ENCODE measurements at regions of chr12 and their contacts with region 1.

Region 1: DNA sequence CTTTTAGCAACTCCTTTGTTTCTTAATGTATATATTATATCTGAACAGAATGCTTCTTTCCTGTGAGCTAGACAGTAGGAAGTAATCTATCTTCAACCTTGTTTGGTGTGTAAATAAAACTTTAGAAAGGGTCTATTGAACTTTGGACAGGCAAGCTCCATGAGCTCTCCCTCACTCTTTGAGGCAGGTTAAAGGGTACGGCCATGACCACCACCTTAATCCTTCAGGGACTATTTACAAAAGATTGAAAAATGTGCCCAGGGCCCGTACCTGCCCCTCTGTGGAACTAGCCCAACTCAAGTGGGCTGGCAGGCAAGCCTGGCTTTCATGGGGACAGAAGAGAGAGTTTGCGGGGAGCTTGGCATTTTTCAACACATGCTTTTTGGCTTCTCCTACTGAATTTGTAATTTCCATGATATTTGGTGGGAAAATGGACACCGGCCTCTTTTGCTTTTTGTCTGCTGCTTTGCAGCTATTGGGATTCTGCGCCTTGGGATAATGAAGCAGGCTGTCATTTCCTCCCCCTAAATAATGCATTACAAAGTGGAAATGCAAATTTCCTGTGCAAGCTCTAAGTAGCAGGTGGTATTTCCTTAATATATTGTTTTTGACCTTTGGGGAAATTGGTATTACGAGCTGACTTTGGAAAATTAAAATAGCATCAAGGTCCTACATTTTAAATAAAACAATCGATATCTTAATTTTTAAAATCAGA is 106.0 kb downstream of the HMGA2 start:
- DNase-seq: no peak
- H3K4me3 ChIP-seq: no peak overlapping the region
- H3K27ac ChIP-seq: no peak overlapping the region
- H3K4me1 ChIP-seq: peaks cover 7 to 19% (median 16%) of the 10 kb centered on the region in 4 experiments
- H3K27me3 ChIP-seq: no peaks in the 10 kb centered on the region
- CTCF ChIP-seq: no peak
- EP300 ChIP-seq: no peak
- POLR2A ChIP-seq: no peak
- RAD21 ChIP-seq: no peak

Region 2: GRCh38 chr12:65941388-65941787 is 11.1 kb after region 1 on chr12:
- CTCF ChIA-PET with region 1: interaction called, 16 read pairs
- POLR2A ChIA-PET with region 1: interaction called, 3 read pairs
- DNase-seq: no peak
- H3K4me3 ChIP-seq: no peak overlapping the region
- H3K27ac ChIP-seq: no peak overlapping the region
- H3K4me1 ChIP-seq: peaks cover 0 to 1% (median 0%) of the 10 kb centered on the region in 4 experiments; a peak in 1 of 7 replicates
- H3K27me3 ChIP-seq: no peaks in the 10 kb centered on the region
- CTCF ChIP-seq: no peak
- EP300 ChIP-seq: no peak
- POLR2A ChIP-seq: no peak
- RAD21 ChIP-seq: no peak

Region 3: GRCh38 chr12:65962921-65963861 is 32.9 kb after region 1 on chr12:
- CTCF ChIA-PET with region 1: interaction called, 10 read pairs
- POLR2A ChIA-PET with region 1: no interaction called
- DNase-seq: peak in 1 of 2 experiments; percentile 77
- H3K4me3 ChIP-seq: no peak overlapping the region
- H3K27ac ChIP-seq: no peak overlapping the region
- H3K4me1 ChIP-seq: no peaks in the 10 kb centered on the region; a peak in 1 of 7 replicates
- H3K27me3 ChIP-seq: no peaks in the 10 kb centered on the region
- CTCF ChIP-seq: peak; percentile 67 to 78 (median 70)
- EP300 ChIP-seq: no peak
- POLR2A ChIP-seq: no peak
- RAD21 ChIP-seq: peak; percentile 33 to 61